ENCODE measurements at regions of chr1 and their contacts with region 1.

Region 1: GRCh38 chr1:226121587-226122400 is 59.3 kb downstream of the H3-3A start:
- DNase-seq: peak; percentile 26
- ATAC-seq: peak; percentile 88
- H3K4me3 ChIP-seq: peak overlapping the region; percentile 66
- H3K27ac ChIP-seq: peak overlapping the region; percentile 46; the same call in 1 of the 2 replicates
- H3K4me1 ChIP-seq: peaks cover 2% of the 10 kb centered on the region; the same call in 1 of the 2 replicates
- H3K27me3 ChIP-seq: peaks cover 3% of the 10 kb centered on the region; the same call in 1 of the 2 replicates
- CTCF ChIP-seq: peak; percentile 78
- POLR2A ChIP-seq: no peak
- RAD21 ChIP-seq: peak; percentile 66

Region 2: DNA sequence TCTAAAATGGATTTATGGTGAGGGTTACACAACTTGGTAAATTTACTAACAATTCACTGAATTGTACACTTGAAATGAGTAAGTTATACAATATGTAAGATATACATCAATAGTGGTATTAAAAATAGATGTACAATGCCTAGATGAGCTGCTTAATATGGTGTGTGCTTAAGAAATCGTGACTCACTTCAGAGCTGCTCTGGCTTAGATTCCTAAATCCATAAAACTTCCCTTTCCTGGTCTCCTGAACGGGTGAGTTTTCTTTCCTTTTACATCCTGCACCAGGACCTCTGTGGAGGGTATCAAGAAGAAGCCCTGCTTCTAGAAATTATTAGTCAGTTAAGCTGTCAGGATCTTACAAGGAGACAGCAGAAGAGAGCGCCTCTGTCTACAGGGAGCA is 28.8 kb before region 1 on chr1:
- CTCF ChIA-PET with region 1: no interaction called
- POLR2A ChIA-PET with region 1: no interaction called
- dilution Hi-C with region 1: no loop called
- in situ Hi-C with region 1: no loop called
- intact Hi-C with region 1: loop called (anchors 1 kb)
- DNase-seq: peak; percentile 51
- ATAC-seq: peak; percentile 59
- H3K4me3 ChIP-seq: no peak overlapping the region
- H3K27ac ChIP-seq: no peak overlapping the region
- H3K4me1 ChIP-seq: peaks cover 3% of the 10 kb centered on the region; the same call in 1 of the 2 replicates
- H3K27me3 ChIP-seq: peaks cover 8% of the 10 kb centered on the region
- CTCF ChIP-seq: no peak
- POLR2A ChIP-seq: no peak
- RAD21 ChIP-seq: no peak

Region 3: DNA sequence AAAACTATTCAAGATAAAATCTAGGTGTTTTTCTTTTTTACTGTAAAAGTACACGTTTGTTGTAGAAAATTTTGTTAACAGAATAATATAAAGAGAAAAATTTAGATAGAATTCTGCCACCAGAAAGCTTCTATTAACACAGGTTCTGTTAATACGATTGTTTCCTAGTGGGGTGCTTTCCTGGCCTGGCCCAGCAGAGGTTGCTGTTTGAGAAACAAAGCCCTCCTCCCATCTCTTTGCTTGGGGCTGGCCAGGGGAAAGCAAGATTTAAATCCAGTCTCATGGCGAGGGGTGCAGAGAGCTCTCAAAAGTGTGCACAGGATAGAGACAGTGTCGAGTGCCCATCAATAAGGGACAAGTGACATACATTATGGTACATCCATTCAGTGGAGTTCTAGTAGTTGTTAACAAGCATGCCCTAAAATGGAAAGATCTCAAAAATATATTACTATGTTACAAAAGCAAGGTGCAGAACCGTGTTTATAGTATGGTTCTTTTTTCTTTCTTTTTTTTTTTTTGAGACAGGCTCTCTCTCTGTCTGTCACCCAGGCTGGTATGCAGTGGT is 79.3 kb after region 1 on chr1:
- CTCF ChIA-PET with region 1: interaction called, 16 read pairs
- POLR2A ChIA-PET with region 1: no interaction called
- dilution Hi-C with region 1: no loop called
- in situ Hi-C with region 1: no loop called
- intact Hi-C with region 1: loop called (anchors 1 kb)
- DNase-seq: peak; percentile 9
- ATAC-seq: 0 out of 2 replicates have a peak, but pooled peaks have one; percentile 50
- H3K4me3 ChIP-seq: no peak overlapping the region
- H3K27ac ChIP-seq: no peak overlapping the region
- H3K4me1 ChIP-seq: no peaks in the 10 kb centered on the region
- H3K27me3 ChIP-seq: peaks cover 4% of the 10 kb centered on the region; the same call in 1 of the 2 replicates
- CTCF ChIP-seq: peak; percentile 38
- POLR2A ChIP-seq: no peak
- RAD21 ChIP-seq: peak; percentile 20; the same call in 1 of the 2 replicates

Region 4: GRCh38 chr1:226332947-226333346 is 211.2 kb after region 1 on chr1:
- CTCF ChIA-PET with region 1: interaction called, 8 read pairs
- POLR2A ChIA-PET with region 1: no interaction called
- dilution Hi-C with region 1: no loop called
- in situ Hi-C with region 1: no loop called
- intact Hi-C with region 1: loop called (anchors 2 kb)
- DNase-seq: no peak
- ATAC-seq: no peak
- H3K4me3 ChIP-seq: no peak overlapping the region
- H3K27ac ChIP-seq: no peak overlapping the region
- H3K4me1 ChIP-seq: no peaks in the 10 kb centered on the region
- H3K27me3 ChIP-seq: no peaks in the 10 kb centered on the region
- CTCF ChIP-seq: no peak
- POLR2A ChIP-seq: no peak
- RAD21 ChIP-seq: no peak

Region 5: GRCh38 chr1:226370144-226370923 is 248.5 kb after region 1 on chr1:
- CTCF ChIA-PET with region 1: no interaction called
- POLR2A ChIA-PET with region 1: no interaction called
- dilution Hi-C with region 1: no loop called
- in situ Hi-C with region 1: no loop called
- intact Hi-C with region 1: loop called (anchors 10 kb)
- DNase-seq: no peak
- ATAC-seq: no peak
- H3K4me3 ChIP-seq: no peak overlapping the region
- H3K27ac ChIP-seq: no peak overlapping the region
- H3K4me1 ChIP-seq: peaks cover 3% of the 10 kb centered on the region; the same call in 1 of the 2 replicates
- H3K27me3 ChIP-seq: no peaks in the 10 kb centered on the region
- CTCF ChIP-seq: no peak
- POLR2A ChIP-seq: no peak
- RAD21 ChIP-seq: no peak

Measured in IMR-90 (cell line).